B cell (primary cell): ENCODE measurements at regions of chr11 and their contacts with region 1.

Region 1: DNA sequence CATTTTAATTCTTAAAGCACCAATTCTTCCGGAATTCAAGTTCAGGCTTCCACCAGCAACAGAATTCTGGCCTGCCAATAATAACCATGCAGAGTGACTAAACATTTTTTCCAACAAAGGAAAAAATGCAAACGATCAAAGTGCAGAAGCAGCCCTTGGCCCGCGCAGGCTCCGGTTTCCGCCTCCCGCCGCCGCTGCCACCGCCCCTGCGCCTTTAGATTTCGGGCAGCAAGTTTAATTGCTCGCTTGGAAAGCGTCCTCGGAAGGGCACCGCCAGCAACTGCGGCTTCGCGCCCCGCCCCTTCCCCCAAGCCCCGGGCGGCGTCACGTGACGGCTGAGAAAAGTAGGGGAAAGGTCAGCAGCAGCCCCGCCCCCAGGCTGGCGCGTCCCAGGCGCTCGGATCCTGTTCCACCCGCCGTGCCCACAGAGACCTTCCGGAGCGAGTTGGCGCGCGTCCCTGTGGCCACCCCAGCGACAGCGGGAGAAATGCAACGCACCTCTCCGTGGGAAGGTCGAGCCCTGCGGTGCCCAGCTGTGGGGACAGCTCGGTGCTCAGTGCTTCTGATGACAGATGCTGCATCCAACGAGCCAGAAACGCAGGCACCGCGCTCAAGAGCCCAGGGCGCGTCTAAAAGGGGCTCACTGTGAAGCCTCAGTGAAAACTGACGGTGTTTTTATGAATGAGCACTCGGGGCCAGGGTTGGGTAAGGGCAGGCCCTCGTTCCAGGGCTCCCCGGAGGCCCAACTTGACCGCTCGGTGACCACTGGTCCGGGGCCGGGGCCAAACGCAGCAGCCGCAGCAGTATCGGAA is 2.5 kb downstream of the CPT1A start:
- DNase-seq: peak; percentile 94
- ATAC-seq: peak; percentile 64
- H3K4me3 ChIP-seq: peak overlapping the region; percentile 27 to 76 (median 70)
- H3K4me3 Mint-ChIP-seq: peak overlapping the region; percentile 93
- H3K27ac ChIP-seq: peak overlapping the region; percentile 68 to 76
- H3K27ac Mint-ChIP-seq: peak overlapping the region; percentile 97
- H3K4me1 ChIP-seq: peaks cover 37 to 57% of the 10 kb centered on the region in 2 donors
- H3K4me1 Mint-ChIP-seq: peaks cover 57% of the 10 kb centered on the region
- H3K27me3 ChIP-seq: no peaks in the 10 kb centered on the region
- H3K27me3 Mint-ChIP-seq: no peaks in the 10 kb centered on the region
- CTCF ChIP-seq: no peak

Region 2: DNA sequence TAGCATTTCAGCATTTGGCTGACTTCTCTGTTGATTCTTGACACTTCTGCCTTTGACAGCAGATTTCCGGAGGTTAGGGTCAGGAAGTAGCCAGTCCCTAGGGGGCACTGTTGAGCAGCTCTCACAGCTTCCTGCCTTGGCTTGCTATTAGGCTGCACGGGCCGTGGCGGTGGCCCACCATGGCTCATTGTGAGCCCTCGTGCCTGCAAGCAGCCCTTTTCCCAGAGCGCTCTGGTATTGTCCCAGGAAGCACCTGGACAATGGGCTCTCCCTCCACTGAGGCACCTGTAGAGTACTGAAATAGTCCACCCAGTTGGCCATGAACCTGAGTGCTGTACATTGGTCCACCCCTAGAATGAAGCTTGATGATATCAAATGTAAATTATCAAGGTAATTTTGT is 255.2 kb before region 1 on chr11:
- CTCF ChIA-PET with region 1: interaction called, 32 read pairs
- POLR2A ChIA-PET with region 1: no interaction called
- intact Hi-C with region 1: loop called (anchors 1 kb)
- DNase-seq: peak; percentile 70
- ATAC-seq: no peak
- H3K4me3 ChIP-seq: no peak overlapping the region
- H3K4me3 Mint-ChIP-seq: no peak overlapping the region
- H3K27ac ChIP-seq: no peak overlapping the region
- H3K27ac Mint-ChIP-seq: peak overlapping the region; percentile 50
- H3K4me1 ChIP-seq: no peaks in the 10 kb centered on the region
- H3K4me1 Mint-ChIP-seq: peaks cover 13% of the 10 kb centered on the region
- H3K27me3 ChIP-seq: no peaks in the 10 kb centered on the region
- H3K27me3 Mint-ChIP-seq: no peaks in the 10 kb centered on the region
- CTCF ChIP-seq: peak; percentile 75

Region 3: DNA sequence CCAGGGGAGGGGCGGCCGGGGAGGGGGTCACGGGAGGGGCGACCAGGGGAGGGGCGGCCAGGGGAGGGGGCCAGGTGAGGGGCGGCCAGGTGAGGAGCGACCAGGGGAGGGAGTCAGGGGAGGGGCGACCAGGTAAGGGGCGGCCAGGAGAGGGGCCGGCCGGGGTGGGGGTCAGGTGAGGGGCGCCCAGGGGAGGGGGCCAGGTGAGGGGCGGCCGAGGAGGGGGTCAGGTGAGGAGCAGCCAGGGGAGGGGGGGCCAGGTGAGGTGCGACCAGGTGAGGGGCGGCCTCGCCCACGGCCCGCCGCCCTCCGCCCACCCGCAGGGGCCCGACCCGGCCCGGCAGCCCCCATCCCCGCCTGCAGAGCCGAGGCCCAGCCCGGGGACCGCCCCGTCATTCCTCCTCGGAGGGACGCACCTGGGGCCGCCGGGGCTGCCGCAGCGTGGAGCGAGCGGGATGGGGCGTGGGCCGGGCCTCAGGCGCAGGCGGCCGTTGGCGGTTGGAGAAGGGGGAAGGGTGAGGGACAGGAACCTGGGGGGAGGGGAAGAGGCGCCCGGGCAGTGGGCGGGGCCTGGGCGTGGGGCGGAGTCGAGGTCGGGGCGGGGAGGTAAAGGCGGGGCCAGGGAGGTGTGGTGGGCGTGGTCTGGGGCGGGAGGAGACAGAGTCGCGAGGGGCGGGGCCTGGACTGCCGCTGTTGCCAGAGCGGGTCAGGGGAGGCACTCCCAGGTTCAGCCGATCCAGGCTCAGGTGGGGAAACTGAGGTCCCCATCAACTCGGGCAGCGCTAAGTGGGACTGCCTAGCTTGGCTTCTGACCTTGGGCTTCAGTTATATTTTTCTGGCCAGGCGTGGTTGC is 88.0 kb before region 1 on chr11 and contains the start of gene TESMIN:
- CTCF ChIA-PET with region 1: interaction called, 10 read pairs
- POLR2A ChIA-PET with region 1: interaction called, 5 read pairs
- intact Hi-C with region 1: loop called (anchors 1 kb)
- DNase-seq: peak; percentile 91
- ATAC-seq: peak; percentile 100
- H3K4me3 ChIP-seq: peak within 1 kb of the TSS in 3 of 5 experiments; percentile 53 to 68 (median 62)
- H3K4me3 Mint-ChIP-seq: peak within 1 kb of the TSS; percentile 83
- H3K27ac ChIP-seq: no peak within 1 kb of the TSS
- H3K27ac Mint-ChIP-seq: peak within 1 kb of the TSS; percentile 50
- H3K4me1 ChIP-seq: peaks cover 3 to 11% of the 10 kb centered on the region in 2 donors
- H3K4me1 Mint-ChIP-seq: peaks cover 12% of the 10 kb centered on the region
- H3K27me3 ChIP-seq: no peaks in the 10 kb centered on the region
- H3K27me3 Mint-ChIP-seq: no peaks in the 10 kb centered on the region
- CTCF ChIP-seq: no peak
- total RNA-seq, gene TESMIN: 4.3 and 4.6 TPM in 2 replicates

Region 4: DNA sequence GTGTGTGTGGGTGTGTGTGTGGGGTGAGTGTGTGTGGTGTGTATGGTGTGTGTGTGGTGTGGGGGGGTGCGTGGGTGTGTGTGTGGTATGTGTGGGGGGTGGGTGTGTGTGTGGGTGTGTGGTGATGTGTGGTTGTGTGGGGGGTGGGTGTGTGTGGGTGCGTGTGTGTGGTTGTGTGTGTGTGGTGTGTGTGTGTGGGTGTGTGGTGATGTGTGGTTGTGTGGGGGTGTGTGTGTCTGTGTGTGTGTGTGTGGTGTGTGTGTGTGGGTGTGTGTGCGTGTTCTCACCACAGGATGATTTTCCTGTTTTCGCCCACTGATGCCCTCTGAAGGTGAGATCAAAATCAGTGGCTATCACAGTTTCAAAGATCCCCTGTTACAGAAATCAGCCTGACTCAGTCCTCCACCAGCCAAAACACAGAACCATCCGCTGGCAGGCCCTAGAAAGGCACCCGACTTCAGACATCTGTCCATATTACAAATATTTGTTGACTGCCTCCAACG is 22.3 kb before region 1 on chr11:
- CTCF ChIA-PET with region 1: interaction called, 19 read pairs
- POLR2A ChIA-PET with region 1: interaction called, 10 read pairs
- intact Hi-C with region 1: loop called (anchors 1 kb)
- DNase-seq: no peak
- ATAC-seq: no peak
- H3K4me3 ChIP-seq: no peak overlapping the region
- H3K4me3 Mint-ChIP-seq: no peak overlapping the region
- H3K27ac ChIP-seq: no peak overlapping the region
- H3K27ac Mint-ChIP-seq: peak overlapping the region; percentile 22
- H3K4me1 ChIP-seq: peaks cover 18 to 32% of the 10 kb centered on the region in 2 donors
- H3K4me1 Mint-ChIP-seq: peaks cover 52% of the 10 kb centered on the region
- H3K27me3 ChIP-seq: no peaks in the 10 kb centered on the region
- H3K27me3 Mint-ChIP-seq: no peaks in the 10 kb centered on the region
- CTCF ChIP-seq: no peak

Region 5: DNA sequence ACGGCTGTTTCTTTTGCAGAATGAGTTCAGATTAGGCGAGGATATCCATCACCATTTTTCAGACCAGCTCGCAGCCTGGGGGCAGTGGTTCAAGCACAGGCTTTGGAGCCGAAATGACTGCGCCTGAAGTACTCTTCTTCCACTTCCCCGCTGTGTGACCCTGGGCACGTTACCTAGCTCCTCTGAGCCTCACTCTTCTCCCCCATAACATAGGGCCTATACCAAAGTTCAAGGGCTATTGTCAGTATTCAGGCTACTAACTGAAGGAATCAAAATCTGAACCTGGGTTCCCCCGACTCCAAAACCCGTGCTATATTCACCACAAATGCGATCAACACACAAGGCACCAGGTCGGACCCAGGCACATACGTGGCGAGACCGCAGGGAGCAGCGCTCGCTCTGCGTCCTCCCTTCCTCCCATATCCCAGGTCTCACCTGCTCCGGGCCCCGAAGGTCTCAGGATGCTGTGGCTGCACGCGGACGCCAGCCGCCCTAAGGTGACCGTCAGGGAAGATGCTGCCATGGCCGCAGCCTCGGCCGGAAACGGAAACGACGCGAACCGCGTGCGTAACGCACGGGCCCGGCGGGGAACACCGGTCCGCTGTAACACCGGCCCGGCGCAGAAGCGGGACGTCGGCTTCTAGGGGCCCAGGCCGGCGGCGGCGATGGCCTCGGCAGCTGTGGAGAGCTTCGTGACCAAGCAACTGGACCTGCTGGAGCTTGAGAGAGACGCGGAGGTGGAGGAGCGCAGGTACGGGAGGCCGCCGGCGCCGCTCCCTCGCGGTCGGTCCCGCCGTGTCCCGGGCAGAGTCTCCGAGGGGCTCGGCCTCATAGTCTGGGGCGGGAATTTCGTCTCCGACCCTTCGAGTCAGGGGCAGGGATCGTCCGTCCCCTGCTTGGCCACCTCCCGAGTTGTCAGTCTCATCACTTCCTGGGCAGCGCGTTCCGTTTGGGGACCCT is 64.3 kb after region 1 on chr11 and contains the starts of genes IGHMBP2 and MRPL21:
- CTCF ChIA-PET with region 1: interaction called, 7 read pairs
- POLR2A ChIA-PET with region 1: interaction called, 4 read pairs
- intact Hi-C with region 1: loop called (anchors 1 kb)
- DNase-seq: peak; percentile 90
- ATAC-seq: peak; percentile 95
- H3K4me3 ChIP-seq: peak within 1 kb of the TSS; percentile 79 to 99 (median 93)
- H3K4me3 Mint-ChIP-seq: peak within 1 kb of the TSS; percentile 97
- H3K27ac ChIP-seq: peak within 1 kb of the TSS; percentile 75 to 91
- H3K27ac Mint-ChIP-seq: peak within 1 kb of the TSS; percentile 88
- H3K4me1 ChIP-seq: peaks cover 14 to 21% of the 10 kb centered on the region in 2 donors
- H3K4me1 Mint-ChIP-seq: peaks cover 41% of the 10 kb centered on the region
- H3K27me3 ChIP-seq: no peaks in the 10 kb centered on the region
- H3K27me3 Mint-ChIP-seq: no peaks in the 10 kb centered on the region
- CTCF ChIP-seq: no peak
- total RNA-seq, gene IGHMBP2: 37.0 and 41.4 TPM in 2 replicates
- total RNA-seq, gene MRPL21: 34.4 and 35.8 TPM in 2 replicates

Region 6: DNA sequence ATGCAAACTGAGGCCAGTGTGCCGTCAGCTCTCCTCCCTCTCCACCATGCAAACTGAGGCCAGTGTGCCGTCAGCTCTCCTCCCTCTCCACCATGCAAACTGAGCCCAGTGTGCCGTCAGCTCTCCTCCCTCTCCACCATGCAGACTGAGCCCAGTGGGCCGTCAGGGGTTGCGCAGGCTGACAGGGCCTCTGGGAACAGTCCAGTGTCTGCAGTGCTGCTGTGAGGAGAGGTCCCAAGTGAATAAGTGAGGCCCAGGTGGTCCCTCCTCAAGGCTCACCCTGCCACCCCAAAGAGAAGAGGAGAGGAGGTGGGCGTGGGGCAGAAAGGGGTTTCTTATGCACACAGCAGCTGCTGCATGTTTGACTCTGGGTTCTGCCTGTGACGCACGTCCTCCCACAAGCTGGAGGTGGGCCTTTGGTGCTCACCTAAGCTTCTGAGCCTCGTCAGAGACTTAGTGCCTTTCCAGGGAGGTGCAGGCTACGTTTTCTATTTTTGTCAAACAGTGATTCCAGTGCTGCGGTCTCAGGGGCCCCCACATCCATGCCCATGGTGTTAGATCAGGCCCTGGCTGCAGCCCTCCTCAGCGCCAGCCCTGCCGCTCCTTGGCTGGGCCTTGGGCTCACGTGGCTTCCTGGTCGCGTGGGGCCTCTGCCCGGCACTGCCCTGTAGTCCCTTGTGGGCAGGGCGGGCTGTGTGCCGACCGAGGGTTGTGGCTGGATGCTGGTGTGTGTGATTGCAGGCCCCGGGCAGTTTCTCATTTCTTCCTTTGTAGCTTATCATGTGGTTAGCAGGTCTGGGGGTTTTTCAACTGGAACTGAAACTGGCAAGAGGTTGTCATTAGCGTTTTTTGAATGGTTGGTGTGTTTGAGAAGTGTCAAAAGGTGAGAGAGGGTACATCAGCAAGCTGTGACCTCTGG is 216.6 kb after region 1 on chr11:
- CTCF ChIA-PET with region 1: interaction called, 3 read pairs
- POLR2A ChIA-PET with region 1: no interaction called
- intact Hi-C with region 1: loop called (anchors 1 kb)
- DNase-seq: peak; percentile 94
- ATAC-seq: peak; percentile 87
- H3K4me3 ChIP-seq: peak overlapping the region in 2 of 5 experiments; percentile 15 to 49
- H3K4me3 Mint-ChIP-seq: peak overlapping the region; percentile 61
- H3K27ac ChIP-seq: peak overlapping the region; percentile 92 to 98
- H3K27ac Mint-ChIP-seq: peak overlapping the region; percentile 89
- H3K4me1 ChIP-seq: peaks cover 30 to 64% of the 10 kb centered on the region in 2 donors
- H3K4me1 Mint-ChIP-seq: peaks cover 47% of the 10 kb centered on the region
- H3K27me3 ChIP-seq: no peaks in the 10 kb centered on the region
- H3K27me3 Mint-ChIP-seq: no peaks in the 10 kb centered on the region
- CTCF ChIP-seq: no peak

Region 7: GRCh38 chr11:69296890-69297786 is 457.9 kb after region 1 on chr11:
- CTCF ChIA-PET with region 1: no interaction called
- POLR2A ChIA-PET with region 1: no interaction called
- intact Hi-C with region 1: loop called (anchors 5 kb)
- DNase-seq: peak; percentile 88
- ATAC-seq: peak; percentile 37
- H3K4me3 ChIP-seq: peak overlapping the region; percentile 8 to 60 (median 41)
- H3K4me3 Mint-ChIP-seq: peak overlapping the region; percentile 85
- H3K27ac ChIP-seq: peak overlapping the region; percentile 95 to 99
- H3K27ac Mint-ChIP-seq: peak overlapping the region; percentile 93
- H3K4me1 ChIP-seq: peaks cover 66 to 74% of the 10 kb centered on the region in 2 donors
- H3K4me1 Mint-ChIP-seq: peaks cover 78% of the 10 kb centered on the region
- H3K27me3 ChIP-seq: no peaks in the 10 kb centered on the region
- H3K27me3 Mint-ChIP-seq: no peaks in the 10 kb centered on the region
- CTCF ChIP-seq: no peak